Left cardiac atrium (tissue), 4 donors: ENCODE measurements at regions of chr2 and their contacts with region 1.

Region 1: DNA sequence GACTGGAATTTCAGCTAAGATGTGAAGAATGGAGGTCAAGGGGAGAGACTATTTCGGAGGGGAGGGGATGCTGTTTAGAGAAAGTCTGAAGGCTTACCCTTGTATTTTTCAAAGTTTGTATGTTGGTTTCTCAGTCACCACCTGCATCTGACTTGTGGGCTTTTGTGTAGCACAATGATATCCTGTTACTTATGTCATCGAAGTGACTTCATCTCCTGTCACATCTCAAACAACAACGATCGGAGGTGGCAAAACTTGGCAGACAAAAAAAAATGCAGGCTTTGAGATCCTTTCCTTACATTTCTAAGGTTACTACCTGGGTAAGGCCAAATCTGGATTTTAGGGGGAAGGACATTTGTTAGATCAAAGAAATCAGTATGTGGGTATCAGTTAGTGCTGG is 11.7 kb upstream of the CXCR4 start:
- DNase-seq: no peak
- ATAC-seq: peak in 1 of 2 donors; percentile 29

Region 2: DNA sequence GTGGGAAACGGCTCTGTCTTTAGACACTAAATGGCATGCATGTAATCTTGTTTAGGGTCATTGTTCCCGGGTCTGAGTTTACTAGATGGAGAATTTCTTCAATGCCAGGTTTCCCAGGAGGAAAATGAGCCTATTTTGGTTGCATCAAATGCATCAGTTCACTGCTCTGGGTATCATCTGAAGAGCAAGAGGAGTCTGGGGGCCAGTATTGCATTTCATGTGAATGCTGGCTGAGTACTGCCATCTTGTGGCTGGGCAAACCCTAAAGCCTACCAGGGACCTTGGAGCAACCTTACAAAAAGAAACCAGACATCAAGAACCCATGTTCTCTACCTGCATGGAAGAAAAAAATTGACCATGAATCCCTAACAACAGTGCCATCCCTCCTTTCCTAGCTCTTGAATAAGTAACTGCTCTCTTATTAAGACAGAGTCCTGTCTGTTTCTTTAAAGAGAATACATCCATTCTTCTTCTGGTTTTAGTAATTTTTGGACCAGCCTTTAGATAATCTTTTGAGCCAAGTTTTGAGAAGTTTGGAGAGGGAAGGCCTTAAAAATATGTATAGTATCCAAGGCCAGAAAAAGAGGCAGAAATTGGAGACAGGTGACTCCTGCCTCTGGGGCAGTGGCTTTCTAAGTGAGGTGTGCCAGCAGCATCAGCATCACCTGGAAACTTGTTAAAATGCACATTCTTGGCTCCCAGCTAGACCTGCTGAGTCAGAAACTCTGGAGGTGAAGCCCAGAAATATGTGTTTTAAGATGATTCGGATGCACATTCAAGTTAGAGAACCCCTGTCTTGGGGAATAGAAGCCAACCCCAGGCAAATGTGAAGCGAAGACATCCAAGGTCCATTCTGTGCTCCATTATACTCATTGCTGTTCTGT is 249.4 kb after region 1 on chr2:
- intact Hi-C with region 1: loop called in 1 of 2 experiments (anchors 10 kb)
- DNase-seq: peak; percentile 45
- ATAC-seq: peak; percentile 43 to 68